Activated CD4-positive, alpha-beta T cell treated with anti-CD3 and anti-CD28 coated beads, Interleukin-2, amount 10 ng/mL, durations not matched to agents 24 days and 14 days (primary cell): ENCODE measurements at regions of chr4 and their contacts with region 1.

Region 1: DNA sequence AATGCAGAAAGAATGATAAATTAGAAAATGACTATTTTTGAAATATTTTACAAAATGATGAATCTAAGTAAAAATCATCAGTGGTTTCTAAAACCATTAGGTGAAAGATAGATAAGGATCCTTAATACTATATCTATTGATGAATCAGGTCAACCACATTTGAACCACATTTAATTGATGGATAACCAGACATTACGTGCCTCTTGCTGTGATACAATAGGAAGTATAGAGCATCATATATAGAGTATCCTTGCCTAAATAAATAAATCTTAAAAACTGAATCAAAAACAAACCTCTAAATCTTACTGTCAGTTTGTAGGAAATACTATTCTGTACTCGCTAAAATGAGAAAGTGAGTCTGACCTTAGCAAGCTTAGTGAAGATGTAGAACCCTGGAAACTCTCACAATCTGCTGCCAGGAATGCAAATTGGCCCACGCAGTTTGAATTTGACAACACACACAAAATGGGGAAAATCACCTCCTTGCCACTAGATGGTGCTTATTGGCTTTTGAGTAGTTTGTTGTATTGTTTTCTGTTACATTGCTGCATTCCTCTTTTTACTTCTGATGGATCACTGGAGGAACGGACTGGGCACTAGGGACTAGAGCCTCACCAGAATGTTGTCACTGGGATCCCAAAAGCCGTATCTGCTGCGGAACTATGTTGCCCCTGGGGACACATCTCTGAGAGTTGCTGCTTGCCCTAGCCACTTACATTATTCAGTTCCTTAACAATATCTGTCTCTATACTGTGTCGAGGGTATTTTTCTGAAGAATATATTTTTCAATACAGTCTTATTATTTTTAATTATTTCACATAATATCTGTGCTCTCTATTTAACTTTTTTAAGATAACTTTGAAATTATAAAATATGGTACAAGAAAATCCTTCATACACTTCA is 25.4 kb upstream of the SLAIN2 start:
- DNase-seq: peak; percentile 78
- H3K4me3 Mint-ChIP-seq: no peak overlapping the region
- H3K27ac Mint-ChIP-seq: no peak overlapping the region
- H3K4me1 Mint-ChIP-seq: peaks cover 2% of the 10 kb centered on the region
- H3K27me3 Mint-ChIP-seq: peaks cover 2% of the 10 kb centered on the region

Region 2: GRCh38 chr4:47774079-47774478 is 541.9 kb before region 1 on chr4:
- intact Hi-C with region 1: no loop called
- DNase-seq: no peak
- H3K4me3 Mint-ChIP-seq: no peak overlapping the region
- H3K27ac Mint-ChIP-seq: no peak overlapping the region
- H3K4me1 Mint-ChIP-seq: no peaks in the 10 kb centered on the region
- H3K27me3 Mint-ChIP-seq: peaks cover 1% of the 10 kb centered on the region

Region 3: DNA sequence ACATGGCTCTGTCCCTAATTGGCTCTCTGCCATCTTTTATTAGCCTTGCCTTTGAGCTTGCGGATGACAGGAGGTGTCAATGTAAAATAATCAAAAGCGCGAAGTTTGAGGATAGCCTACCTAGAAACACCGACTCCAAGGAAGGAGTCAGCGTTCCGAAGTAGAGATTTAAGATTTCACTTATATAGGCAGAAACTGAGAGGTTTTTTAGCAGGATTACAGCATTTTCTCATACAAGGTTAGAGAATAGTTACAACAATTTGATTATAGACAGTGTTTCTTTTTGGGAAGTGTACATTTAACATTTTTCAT is 401.1 kb before region 1 on chr4:
- intact Hi-C with region 1: no loop called
- DNase-seq: no peak
- H3K4me3 Mint-ChIP-seq: peak overlapping the region; percentile 84
- H3K27ac Mint-ChIP-seq: peak overlapping the region; percentile 91
- H3K4me1 Mint-ChIP-seq: peaks cover 25% of the 10 kb centered on the region
- H3K27me3 Mint-ChIP-seq: peaks cover 9% of the 10 kb centered on the region

Region 4: GRCh38 chr4:48420144-48420543 is 104.2 kb after region 1 on chr4:
- intact Hi-C with region 1: no loop called
- DNase-seq: no peak
- H3K4me3 Mint-ChIP-seq: no peak overlapping the region
- H3K27ac Mint-ChIP-seq: no peak overlapping the region
- H3K4me1 Mint-ChIP-seq: no peaks in the 10 kb centered on the region
- H3K27me3 Mint-ChIP-seq: no peaks in the 10 kb centered on the region

Region 5: GRCh38 chr4:48445704-48446103 is 129.7 kb after region 1 on chr4:
- intact Hi-C with region 1: loop called (anchors 5 kb)
- DNase-seq: no peak
- H3K4me3 Mint-ChIP-seq: no peak overlapping the region
- H3K27ac Mint-ChIP-seq: no peak overlapping the region
- H3K4me1 Mint-ChIP-seq: no peaks in the 10 kb centered on the region
- H3K27me3 Mint-ChIP-seq: peaks cover 4% of the 10 kb centered on the region

Region 6: GRCh38 chr4:48499551-48500066 is 183.6 kb after region 1 on chr4:
- intact Hi-C with region 1: loop called (anchors 5 kb)
- DNase-seq: no peak
- H3K4me3 Mint-ChIP-seq: no peak overlapping the region
- H3K27ac Mint-ChIP-seq: peak overlapping the region; percentile 12
- H3K4me1 Mint-ChIP-seq: peaks cover 6% of the 10 kb centered on the region
- H3K27me3 Mint-ChIP-seq: no peaks in the 10 kb centered on the region

Region 7: GRCh38 chr4:48546336-48546735 is 230.4 kb after region 1 on chr4:
- intact Hi-C with region 1: loop called (anchors 1 kb)
- DNase-seq: peak; percentile 80
- H3K4me3 Mint-ChIP-seq: no peak overlapping the region
- H3K27ac Mint-ChIP-seq: no peak overlapping the region
- H3K4me1 Mint-ChIP-seq: peaks cover 5% of the 10 kb centered on the region
- H3K27me3 Mint-ChIP-seq: no peaks in the 10 kb centered on the region